ENCODE measurements at regions of chr9 and their contacts with region 1.

Region 1: DNA sequence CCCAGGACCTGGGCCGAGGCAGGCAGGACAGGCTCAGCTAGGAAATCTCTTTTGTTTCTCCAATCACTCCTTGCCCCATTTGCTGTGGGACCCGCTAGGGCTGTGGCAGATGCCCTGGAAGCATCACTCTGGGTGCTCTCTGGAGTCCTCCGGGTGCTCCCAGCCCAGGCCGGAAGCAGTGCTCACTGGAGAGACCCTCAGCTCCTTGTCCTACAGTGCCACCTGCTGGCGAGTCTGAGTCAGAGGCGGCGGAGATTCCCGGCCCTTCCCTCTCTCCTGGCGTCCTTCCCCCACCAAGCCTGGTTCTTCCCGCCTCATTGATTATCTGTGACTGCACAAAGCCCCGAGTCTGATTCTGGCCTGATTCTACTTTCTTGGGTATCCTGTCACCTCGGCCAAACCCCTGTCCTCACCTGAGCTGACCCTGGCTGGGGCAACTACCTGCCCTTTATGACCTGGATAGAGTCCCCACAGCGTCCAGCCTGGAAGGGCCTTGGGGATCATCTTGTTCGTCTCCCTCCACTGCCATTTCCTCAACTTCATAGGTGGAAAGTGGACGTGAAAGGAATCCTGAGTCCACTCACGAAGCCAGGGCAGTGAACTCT is 7.3 kb upstream of the BARHL1 start:
- DNase-seq: peak; percentile 83
- H3K4me3 ChIP-seq: no peak overlapping the region
- H3K27ac ChIP-seq: no peak overlapping the region
- H3K4me1 ChIP-seq: no peaks in the 10 kb centered on the region
- H3K27me3 ChIP-seq: peaks cover 53% of the 10 kb centered on the region

Region 2: DNA sequence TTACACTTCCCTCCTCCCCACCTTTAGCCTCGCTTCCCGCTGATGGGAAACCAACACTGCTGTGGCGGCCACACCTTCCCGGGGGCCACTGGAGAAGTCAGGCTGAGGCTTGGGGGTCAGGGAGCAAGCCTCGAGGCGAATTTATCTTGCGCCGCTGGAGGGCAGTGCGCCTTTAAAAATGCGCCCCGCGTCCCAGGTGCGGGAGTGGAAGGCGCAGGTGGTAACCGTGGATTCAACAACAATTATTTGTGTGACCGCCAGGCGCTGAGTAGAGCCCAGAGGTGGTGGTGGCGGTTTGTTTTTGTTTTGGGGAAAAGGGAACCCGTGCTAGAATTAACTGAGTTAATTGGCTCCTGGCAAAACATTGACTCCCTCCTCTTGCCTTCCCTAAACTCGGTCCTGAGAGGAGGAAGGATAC is 164.0 kb before region 1 on chr9:
- in situ Hi-C with region 1: loop called (anchors 10 kb)
- DNase-seq: peak; percentile 49
- H3K4me3 ChIP-seq: no peak overlapping the region
- H3K27ac ChIP-seq: no peak overlapping the region
- H3K4me1 ChIP-seq: no peaks in the 10 kb centered on the region
- H3K27me3 ChIP-seq: peaks cover 56% of the 10 kb centered on the region